Naive thymus-derived CD4-positive, alpha-beta T cell (primary cell): ENCODE measurements at regions of chr12 and their contacts with region 1.

Region 1: GRCh38 chr12:53200458-53201176 is 6.4 kb downstream of the ITGB7 start:
- DNase-seq: peak in 4 of 9 donors; percentile 41 to 46 (median 42)
- ATAC-seq: peak; percentile 29
- H3K4me3 ChIP-seq: peak overlapping the region; percentile 21
- H3K4me3 Mint-ChIP-seq: peak overlapping the region; percentile 65 to 90 (median 76)
- H3K27ac ChIP-seq: peak overlapping the region; percentile 75
- H3K27ac Mint-ChIP-seq: peak overlapping the region; percentile 82 to 95 (median 92)
- H3K4me1 ChIP-seq: peaks cover 70 to 94% of the 10 kb centered on the region in 2 donors
- H3K4me1 Mint-ChIP-seq: peaks cover 56 to 91% (median 74%) of the 10 kb centered on the region in 7 donors
- H3K27me3 ChIP-seq: no peaks in the 10 kb centered on the region
- H3K27me3 Mint-ChIP-seq: no peaks in the 10 kb centered on the region

Region 2: GRCh38 chr12:53151039-53151438 is 49.6 kb before region 1 on chr12:
- CTCF ChIA-PET with region 1: no interaction called
- POLR2A ChIA-PET with region 1: no interaction called
- intact Hi-C with region 1: no loop called
- DNase-seq: no peak
- ATAC-seq: no peak
- H3K4me3 ChIP-seq: no peak overlapping the region
- H3K4me3 Mint-ChIP-seq: no peak overlapping the region
- H3K27ac ChIP-seq: no peak overlapping the region
- H3K27ac Mint-ChIP-seq: no peak overlapping the region
- H3K4me1 ChIP-seq: no peaks in the 10 kb centered on the region
- H3K4me1 Mint-ChIP-seq: no peaks in the 10 kb centered on the region
- H3K27me3 ChIP-seq: no peaks in the 10 kb centered on the region
- H3K27me3 Mint-ChIP-seq: peaks cover 0 to 10% (median 0%) of the 10 kb centered on the region in 5 donors

Region 3: GRCh38 chr12:53190108-53190729 is 10.4 kb before region 1 on chr12:
- CTCF ChIA-PET with region 1: interaction called, 9 read pairs
- POLR2A ChIA-PET with region 1: interaction called, 217 read pairs
- intact Hi-C with region 1: loop called in 1 of 2 experiments (anchors 1 kb)
- DNase-seq: peak in 7 of 9 donors; percentile 42 to 57 (median 52)
- ATAC-seq: peak; percentile 85
- H3K4me3 ChIP-seq: no peak overlapping the region
- H3K4me3 Mint-ChIP-seq: peak overlapping the region in 1 of 10 donors; percentile 25
- H3K27ac ChIP-seq: peak overlapping the region; percentile 37
- H3K27ac Mint-ChIP-seq: peak overlapping the region in 8 of 9 donors; percentile 36 to 89 (median 68)
- H3K4me1 ChIP-seq: peaks cover 0 to 11% of the 10 kb centered on the region in 2 donors
- H3K4me1 Mint-ChIP-seq: peaks cover 9 to 55% (median 30%) of the 10 kb centered on the region in 7 donors
- H3K27me3 ChIP-seq: no peaks in the 10 kb centered on the region
- H3K27me3 Mint-ChIP-seq: no peaks in the 10 kb centered on the region